GM12878 (cell line): ENCODE measurements at regions of chr10 and their contacts with region 1.

Region 1: GRCh38 chr10:97553575-97554031 is 19.0 kb upstream of the ANKRD2 start:
- DNase-seq: peak; percentile 26
- ATAC-seq: peak; percentile 98
- H3K4me3 ChIP-seq: no peak overlapping the region
- H3K27ac ChIP-seq: no peak overlapping the region
- H3K4me1 ChIP-seq: peaks cover 18% of the 10 kb centered on the region
- H3K27me3 ChIP-seq: no peaks in the 10 kb centered on the region
- CTCF ChIP-seq: peak; percentile 80 to 94 (median 89)
- EP300 ChIP-seq: no peak
- POLR2A ChIP-seq: no peak
- RAD21 ChIP-seq: peak; percentile 78

Region 2: DNA sequence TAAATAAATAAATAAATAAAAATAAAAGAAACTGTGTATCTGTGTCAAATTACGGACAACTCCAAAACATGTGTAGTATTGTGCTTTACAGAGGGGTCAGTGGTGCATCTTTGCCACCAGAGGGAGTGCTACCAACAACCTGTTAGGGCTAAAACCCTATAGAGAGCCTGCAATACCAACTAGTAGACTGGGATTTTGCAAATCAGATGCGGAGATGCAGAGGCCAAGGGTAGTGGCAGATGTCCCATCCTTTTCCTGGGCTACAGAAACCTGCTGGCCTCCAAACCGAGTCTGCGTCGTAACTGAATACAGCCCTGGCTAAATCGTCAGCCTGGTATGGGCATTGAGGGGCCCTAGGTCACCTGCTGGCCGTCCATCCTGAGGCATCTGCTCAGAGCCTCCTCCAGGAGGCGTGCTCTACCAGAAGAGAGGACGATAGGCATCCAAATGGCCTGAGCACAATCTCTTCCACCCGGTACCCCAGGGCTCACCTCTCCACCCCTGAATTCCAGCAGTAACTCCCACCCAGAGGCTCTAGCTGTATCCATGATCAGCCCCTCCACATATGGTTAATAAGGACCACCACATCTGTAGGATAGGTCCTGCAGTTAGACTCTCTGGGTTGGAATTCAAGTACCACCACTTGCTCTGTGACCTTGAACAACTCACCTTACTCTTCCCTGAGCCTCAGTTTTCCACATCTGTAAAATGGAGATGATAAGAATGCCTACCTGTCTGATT is 146.2 kb before region 1 on chr10:
- CTCF ChIA-PET with region 1: interaction called, 27 read pairs
- POLR2A ChIA-PET with region 1: no interaction called
- RAD21 ChIA-PET with region 1: interaction called, 4 read pairs
- SMC1A ChIA-PET with region 1: interaction called, 4 read pairs
- in situ Hi-C with region 1: no loop called
- intact Hi-C with region 1: loop called (anchors 1 kb)
- DNase-seq: no peak
- ATAC-seq: peak; percentile 99
- H3K4me3 ChIP-seq: no peak overlapping the region
- H3K27ac ChIP-seq: no peak overlapping the region
- H3K4me1 ChIP-seq: no peaks in the 10 kb centered on the region
- H3K27me3 ChIP-seq: no peaks in the 10 kb centered on the region
- CTCF ChIP-seq: peak; percentile 65 to 80 (median 67)
- EP300 ChIP-seq: no peak
- POLR2A ChIP-seq: no peak
- RAD21 ChIP-seq: peak; percentile 66

Region 3: GRCh38 chr10:97463363-97464132 is 90.1 kb before region 1 on chr10:
- CTCF ChIA-PET with region 1: interaction called, 34 read pairs
- POLR2A ChIA-PET with region 1: no interaction called
- RAD21 ChIA-PET with region 1: interaction called, 7 read pairs
- SMC1A ChIA-PET with region 1: interaction called, 6 read pairs
- in situ Hi-C with region 1: no loop called
- intact Hi-C with region 1: loop called (anchors 1 kb)
- DNase-seq: peak; percentile 9
- ATAC-seq: peak; percentile 87
- H3K4me3 ChIP-seq: no peak overlapping the region
- H3K27ac ChIP-seq: no peak overlapping the region
- H3K4me1 ChIP-seq: no peaks in the 10 kb centered on the region
- H3K27me3 ChIP-seq: no peaks in the 10 kb centered on the region
- CTCF ChIP-seq: peak; percentile 77 to 85 (median 84)
- EP300 ChIP-seq: no peak
- POLR2A ChIP-seq: no peak
- RAD21 ChIP-seq: peak; percentile 71

Region 4: DNA sequence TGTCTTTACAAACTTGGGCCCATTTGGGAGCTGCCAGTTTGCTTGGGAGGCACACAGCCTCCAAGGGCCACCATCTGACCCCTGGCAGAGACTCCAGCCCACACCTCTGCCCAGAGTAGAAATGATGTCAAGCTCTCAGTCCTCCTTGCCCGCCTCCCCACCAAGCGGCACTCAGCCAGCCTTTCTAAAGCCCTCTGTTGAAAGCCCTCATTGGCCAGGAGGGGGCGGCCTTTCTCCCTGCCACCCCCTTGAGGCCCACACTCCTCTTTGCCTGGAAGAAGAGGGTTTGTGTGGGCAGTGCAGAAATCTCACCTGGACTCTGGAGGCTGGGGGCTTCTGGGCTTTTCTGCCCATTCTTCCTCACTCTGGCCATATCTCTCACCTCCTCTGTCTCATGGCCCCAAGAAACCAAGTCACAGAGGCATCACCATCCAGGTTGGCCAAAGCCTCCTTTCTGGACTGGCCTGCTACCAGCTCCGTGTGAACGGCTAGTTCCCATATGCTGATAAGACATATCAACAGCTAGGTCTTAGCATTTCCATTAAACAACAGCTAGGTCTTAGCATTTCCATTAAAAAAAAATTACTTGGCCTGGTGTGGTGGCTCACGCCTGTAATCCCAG is 18.7 kb before region 1 on chr10:
- CTCF ChIA-PET with region 1: interaction called, 62 read pairs
- POLR2A ChIA-PET with region 1: no interaction called
- RAD21 ChIA-PET with region 1: interaction called, 13 read pairs
- SMC1A ChIA-PET with region 1: interaction called, 7 read pairs
- in situ Hi-C with region 1: no loop called
- intact Hi-C with region 1: loop called (anchors 2 kb)
- DNase-seq: no peak
- ATAC-seq: peak; percentile 98
- H3K4me3 ChIP-seq: no peak overlapping the region
- H3K27ac ChIP-seq: no peak overlapping the region
- H3K4me1 ChIP-seq: no peaks in the 10 kb centered on the region
- H3K27me3 ChIP-seq: no peaks in the 10 kb centered on the region
- CTCF ChIP-seq: peak; percentile 60 to 69 (median 63)
- EP300 ChIP-seq: no peak
- POLR2A ChIP-seq: no peak
- RAD21 ChIP-seq: peak; percentile 70

Region 5: GRCh38 chr10:97572214-97572989 is 18.8 kb after region 1 on chr10 and contains the start of gene ANKRD2:
- CTCF ChIA-PET with region 1: interaction called, 21 read pairs
- POLR2A ChIA-PET with region 1: no interaction called
- RAD21 ChIA-PET with region 1: interaction called, 3 read pairs
- SMC1A ChIA-PET with region 1: no interaction called
- in situ Hi-C with region 1: no loop called
- intact Hi-C with region 1: no loop called
- DNase-seq: no peak
- ATAC-seq: peak; percentile 97
- H3K4me3 ChIP-seq: no peak within 1 kb of the TSS
- H3K27ac ChIP-seq: no peak within 1 kb of the TSS
- H3K4me1 ChIP-seq: no peaks in the 10 kb centered on the region
- H3K27me3 ChIP-seq: no peaks in the 10 kb centered on the region
- CTCF ChIP-seq: peak; percentile 89 to 95 (median 94)
- EP300 ChIP-seq: no peak
- POLR2A ChIP-seq: no peak
- RAD21 ChIP-seq: peak; percentile 73
- polyA plus RNA-seq, gene ANKRD2: not detected